ENCODE measurements at regions of chr9 and their contacts with region 1.

Region 1: DNA sequence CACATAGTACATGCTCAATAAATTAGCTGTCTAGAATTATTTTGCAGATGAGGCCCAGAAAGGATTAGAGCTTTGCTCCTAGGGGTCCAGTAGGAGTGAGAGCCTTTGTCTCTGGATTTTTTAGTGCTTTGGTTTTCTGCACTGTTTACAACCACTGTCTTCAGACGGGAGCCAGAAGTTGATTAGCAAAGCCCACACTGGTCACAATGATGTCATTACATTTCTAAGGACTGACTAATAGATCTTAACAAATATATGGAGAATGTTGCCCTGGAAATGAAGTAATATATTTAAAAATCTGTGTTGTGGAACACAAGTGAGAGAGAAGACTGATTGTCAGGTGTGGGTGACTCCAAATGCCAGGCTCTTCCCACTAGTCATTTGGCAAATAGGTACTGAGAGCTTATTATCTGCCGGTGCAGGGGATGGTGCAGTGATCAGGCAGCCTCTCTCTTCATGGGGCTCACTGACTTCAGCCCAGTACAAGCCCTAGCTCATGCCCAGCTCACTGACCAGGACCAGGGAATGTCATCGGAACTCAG is 76.2 kb downstream of the COL15A1 start:
- DNase-seq: peak; percentile 99
- ATAC-seq: peak; percentile 90
- H3K4me3 ChIP-seq: no peak overlapping the region
- H3K27ac ChIP-seq: peak overlapping the region; percentile 98
- H3K4me1 ChIP-seq: peaks cover 34% of the 10 kb centered on the region
- H3K27me3 ChIP-seq: no peaks in the 10 kb centered on the region
- CTCF ChIP-seq: no peak
- POLR2A ChIP-seq: no peak
- RAD21 ChIP-seq: no peak

Region 2: DNA sequence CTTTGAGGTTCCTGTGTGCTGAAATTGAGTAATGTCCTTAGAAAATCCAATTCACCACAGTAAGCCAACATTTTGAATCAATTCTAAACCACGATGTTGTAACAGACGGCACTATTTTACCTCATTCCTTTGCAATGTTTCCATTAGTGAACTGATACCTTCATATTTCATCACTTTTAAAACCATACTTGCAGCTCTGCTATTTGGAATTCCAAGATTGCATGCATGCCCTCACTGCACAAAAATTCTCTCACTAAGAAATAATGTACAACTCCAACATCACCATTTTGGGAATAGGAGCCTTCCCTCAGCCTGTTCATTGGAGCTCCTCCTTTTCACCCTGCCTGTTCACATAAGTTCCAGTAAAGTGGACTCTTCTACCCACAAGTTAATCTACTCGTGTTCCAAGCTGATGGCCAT is 10.2 kb after region 1 on chr9:
- CTCF ChIA-PET with region 1: no interaction called
- POLR2A ChIA-PET with region 1: no interaction called
- dilution Hi-C with region 1: no loop called
- in situ Hi-C with region 1: no loop called
- intact Hi-C with region 1: loop called (anchors 1 kb)
- DNase-seq: peak; percentile 99
- ATAC-seq: peak; percentile 89
- H3K4me3 ChIP-seq: no peak overlapping the region
- H3K27ac ChIP-seq: peak overlapping the region; percentile 100
- H3K4me1 ChIP-seq: peaks cover 31% of the 10 kb centered on the region
- H3K27me3 ChIP-seq: no peaks in the 10 kb centered on the region
- CTCF ChIP-seq: no peak
- POLR2A ChIP-seq: no peak
- RAD21 ChIP-seq: no peak

Region 3: DNA sequence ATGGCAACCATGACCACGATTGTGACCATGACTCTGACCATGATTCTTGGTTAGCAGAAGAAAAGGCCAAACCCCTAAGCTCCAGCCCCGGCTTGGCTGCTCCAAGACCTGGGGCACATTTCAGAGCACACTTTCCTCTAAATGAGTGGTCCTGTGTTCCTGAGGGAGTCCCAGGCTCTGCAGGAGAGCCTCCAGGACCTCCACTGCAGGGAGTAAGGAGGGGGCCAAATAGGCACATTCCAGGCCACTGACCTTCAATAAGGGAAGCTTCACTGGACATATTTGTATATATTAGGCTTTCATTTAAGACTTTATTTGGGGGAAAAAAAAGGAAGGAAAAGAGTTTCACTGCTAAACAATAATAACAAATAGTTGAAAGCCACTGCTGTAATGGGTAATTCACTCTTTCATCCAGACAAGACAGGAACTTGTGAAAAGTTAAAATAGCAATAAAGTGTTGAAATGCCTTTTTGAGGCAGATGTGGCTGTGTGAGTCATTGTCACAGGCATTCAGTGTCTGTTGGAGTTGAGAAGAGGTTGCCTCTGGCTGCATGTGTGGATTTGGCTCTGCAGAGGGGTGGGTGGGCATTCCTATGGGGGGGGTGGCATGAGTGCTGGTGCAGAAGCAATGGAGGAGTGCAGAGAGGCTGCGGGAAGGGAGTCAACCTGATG is 21.2 kb after region 1 on chr9:
- CTCF ChIA-PET with region 1: no interaction called
- POLR2A ChIA-PET with region 1: no interaction called
- dilution Hi-C with region 1: no loop called
- in situ Hi-C with region 1: no loop called
- intact Hi-C with region 1: loop called (anchors 1 kb)
- DNase-seq: peak; percentile 87
- ATAC-seq: peak; percentile 73
- H3K4me3 ChIP-seq: no peak overlapping the region
- H3K27ac ChIP-seq: peak overlapping the region; percentile 97
- H3K4me1 ChIP-seq: peaks cover 24% of the 10 kb centered on the region
- H3K27me3 ChIP-seq: no peaks in the 10 kb centered on the region
- CTCF ChIP-seq: no peak
- POLR2A ChIP-seq: no peak
- RAD21 ChIP-seq: no peak

Region 4: GRCh38 chr9:99104459-99105151 is 84.7 kb after region 1 on chr9 and contains the start of gene TGFBR1:
- CTCF ChIA-PET with region 1: no interaction called
- POLR2A ChIA-PET with region 1: no interaction called
- dilution Hi-C with region 1: no loop called
- in situ Hi-C with region 1: no loop called
- intact Hi-C with region 1: loop called (anchors 5 kb)
- DNase-seq: peak; percentile 89
- ATAC-seq: peak; percentile 89
- H3K4me3 ChIP-seq: peak within 1 kb of the TSS; percentile 67
- H3K27ac ChIP-seq: peak within 1 kb of the TSS; percentile 95
- H3K4me1 ChIP-seq: peaks cover 14% of the 10 kb centered on the region
- H3K27me3 ChIP-seq: no peaks in the 10 kb centered on the region
- CTCF ChIP-seq: no peak
- POLR2A ChIP-seq: peak; percentile 93
- RAD21 ChIP-seq: no peak; the same call in 1 of the 2 replicates
- total RNA-seq, gene TGFBR1: 57.8 and 75.3 TPM in 2 replicates

Region 5: GRCh38 chr9:99130069-99130468 is 110.2 kb after region 1 on chr9:
- CTCF ChIA-PET with region 1: no interaction called
- POLR2A ChIA-PET with region 1: no interaction called
- dilution Hi-C with region 1: no loop called
- in situ Hi-C with region 1: loop called (anchors 5 kb)
- intact Hi-C with region 1: no loop called
- DNase-seq: no peak
- ATAC-seq: no peak
- H3K4me3 ChIP-seq: no peak overlapping the region
- H3K27ac ChIP-seq: no peak overlapping the region
- H3K4me1 ChIP-seq: peaks cover 18% of the 10 kb centered on the region
- H3K27me3 ChIP-seq: no peaks in the 10 kb centered on the region
- CTCF ChIP-seq: no peak
- POLR2A ChIP-seq: no peak
- RAD21 ChIP-seq: no peak

Measured in IMR-90 (cell line).